ENCODE measurements at regions of chr3 and their contacts with region 1.

Region 1: DNA sequence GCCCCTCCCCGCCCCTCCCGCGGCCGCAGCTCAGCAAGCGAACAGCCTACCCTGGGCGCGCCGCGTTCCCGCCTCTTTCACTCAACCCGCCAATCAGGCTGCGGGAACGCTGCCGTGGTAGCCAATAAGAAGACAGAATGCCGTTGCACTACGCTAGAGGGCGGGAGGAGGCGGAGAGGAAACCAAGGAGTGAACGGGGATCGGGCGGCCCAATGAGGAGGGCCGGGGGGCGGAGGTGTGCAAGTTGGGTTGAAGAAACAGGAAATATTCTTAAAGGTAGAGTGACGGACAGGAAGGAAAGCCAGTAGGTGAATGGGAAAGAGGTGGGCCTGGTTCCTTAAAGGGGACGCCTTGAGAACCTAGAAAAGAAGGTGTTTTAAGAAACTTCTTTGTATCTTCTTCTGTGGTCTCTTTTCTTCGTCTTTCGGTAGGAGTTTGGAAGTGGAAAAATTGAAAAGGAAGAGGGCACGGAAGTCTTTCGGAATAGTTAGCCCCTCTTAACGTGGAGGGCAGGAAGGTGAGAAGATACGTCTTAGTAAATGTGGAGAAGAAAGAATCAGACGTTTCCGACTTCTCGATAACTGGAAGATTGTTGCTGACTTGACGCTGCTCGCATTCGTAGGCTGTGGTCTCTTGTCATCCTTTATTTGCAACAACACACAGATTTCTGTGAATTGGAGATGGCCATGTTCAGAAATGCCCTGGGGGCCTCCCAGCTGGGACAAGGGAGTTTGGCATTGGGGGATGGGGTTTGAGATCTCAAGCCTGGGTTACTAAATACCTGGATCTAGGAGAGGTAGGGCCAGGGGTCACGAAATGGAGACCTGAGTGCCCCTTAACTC is 437 bp upstream of the USF3 start:
- DNase-seq: peak; percentile 94 to 100 (median 99)
- ATAC-seq: peak; percentile 80 to 84
- H3K4me3 Mint-ChIP-seq: no peak overlapping the region
- H3K27ac Mint-ChIP-seq: no peak overlapping the region
- H3K4me1 Mint-ChIP-seq: peaks cover 16 to 34% (median 29%) of the 10 kb centered on the region in 4 donors
- H3K27me3 Mint-ChIP-seq: no peaks in the 10 kb centered on the region

Region 2: GRCh38 chr3:113514265-113514769 is 182.6 kb before region 1 on chr3:
- POLR2A ChIA-PET with region 1: interaction called, 15 read pairs
- DNase-seq: peak in 1 of 10 donors; percentile 5
- ATAC-seq: no peak
- H3K4me3 Mint-ChIP-seq: no peak overlapping the region
- H3K27ac Mint-ChIP-seq: no peak overlapping the region
- H3K4me1 Mint-ChIP-seq: peaks cover 14 to 25% (median 18%) of the 10 kb centered on the region in 4 donors
- H3K27me3 Mint-ChIP-seq: peaks cover 0 to 16% (median 4%) of the 10 kb centered on the region in 5 donors

Region 3: GRCh38 chr3:113745273-113746068 is 48.6 kb after region 1 on chr3:
- POLR2A ChIA-PET with region 1: interaction called, 82 read pairs
- DNase-seq: peak; percentile 45 to 88 (median 76)
- ATAC-seq: peak; percentile 72 to 73
- H3K4me3 Mint-ChIP-seq: peak overlapping the region; percentile 93 to 100 (median 98)
- H3K27ac Mint-ChIP-seq: peak overlapping the region; percentile 95 to 100 (median 100)
- H3K4me1 Mint-ChIP-seq: peaks cover 36 to 80% (median 72%) of the 10 kb centered on the region in 4 donors
- H3K27me3 Mint-ChIP-seq: no peaks in the 10 kb centered on the region

Measured in naive thymus-derived CD8-positive, alpha-beta T cell (primary cell).